AG04449 (cell line): ENCODE measurements at regions of chr3 and their contacts with region 1.

Region 1: GRCh38 chr3:42539869-42540714 is 37.6 kb downstream of the VIPR1 start:
- DNase-seq: no peak
- H3K4me3 ChIP-seq: no peak overlapping the region
- CTCF ChIP-seq: peak; percentile 66

Region 2: GRCh38 chr3:42247576-42248027 is 292.5 kb before region 1 on chr3:
- CTCF ChIA-PET with region 1: interaction called, 107 read pairs
- POLR2A ChIA-PET with region 1: no interaction called
- DNase-seq: no peak
- H3K4me3 ChIP-seq: no peak overlapping the region
- CTCF ChIP-seq: peak; percentile 66

Region 3: DNA sequence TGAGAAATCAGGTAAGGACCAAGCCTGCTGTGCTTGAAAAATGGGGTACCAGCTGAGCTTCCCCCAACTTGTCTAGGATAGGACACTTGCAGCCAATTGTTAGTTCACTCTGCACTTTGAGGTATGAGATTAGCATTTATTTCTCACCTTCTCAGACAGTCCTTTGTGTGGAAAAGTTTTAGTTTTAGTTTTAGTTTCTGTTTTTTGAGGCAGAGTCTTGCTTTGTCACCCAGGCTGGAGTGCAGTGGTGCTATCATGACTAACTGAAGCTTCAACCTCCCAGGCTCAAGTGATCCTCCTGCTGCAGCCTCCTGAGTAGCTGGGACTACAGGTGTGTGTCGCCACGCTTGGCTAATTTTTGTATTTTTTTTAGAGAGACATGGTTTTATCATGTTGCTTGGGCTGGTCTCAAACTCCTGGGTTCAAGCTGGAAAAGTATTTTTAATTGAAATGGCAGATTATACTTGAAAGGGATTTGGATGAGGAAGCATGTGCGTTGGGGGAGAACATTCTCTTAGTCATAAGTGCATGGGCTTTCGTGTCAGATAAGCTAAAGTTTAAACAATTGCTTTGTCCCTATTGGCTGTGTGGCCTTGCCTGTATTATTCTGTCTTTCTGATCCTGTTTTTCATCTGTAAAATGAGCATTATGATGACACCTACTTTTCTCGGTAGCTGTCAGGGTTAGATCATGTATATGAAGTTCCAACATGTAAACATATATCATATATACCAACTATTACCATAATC is 249.0 kb before region 1 on chr3:
- CTCF ChIA-PET with region 1: no interaction called
- POLR2A ChIA-PET with region 1: no interaction called
- DNase-seq: no peak
- H3K4me3 ChIP-seq: no peak overlapping the region
- CTCF ChIP-seq: no peak

Region 4: DNA sequence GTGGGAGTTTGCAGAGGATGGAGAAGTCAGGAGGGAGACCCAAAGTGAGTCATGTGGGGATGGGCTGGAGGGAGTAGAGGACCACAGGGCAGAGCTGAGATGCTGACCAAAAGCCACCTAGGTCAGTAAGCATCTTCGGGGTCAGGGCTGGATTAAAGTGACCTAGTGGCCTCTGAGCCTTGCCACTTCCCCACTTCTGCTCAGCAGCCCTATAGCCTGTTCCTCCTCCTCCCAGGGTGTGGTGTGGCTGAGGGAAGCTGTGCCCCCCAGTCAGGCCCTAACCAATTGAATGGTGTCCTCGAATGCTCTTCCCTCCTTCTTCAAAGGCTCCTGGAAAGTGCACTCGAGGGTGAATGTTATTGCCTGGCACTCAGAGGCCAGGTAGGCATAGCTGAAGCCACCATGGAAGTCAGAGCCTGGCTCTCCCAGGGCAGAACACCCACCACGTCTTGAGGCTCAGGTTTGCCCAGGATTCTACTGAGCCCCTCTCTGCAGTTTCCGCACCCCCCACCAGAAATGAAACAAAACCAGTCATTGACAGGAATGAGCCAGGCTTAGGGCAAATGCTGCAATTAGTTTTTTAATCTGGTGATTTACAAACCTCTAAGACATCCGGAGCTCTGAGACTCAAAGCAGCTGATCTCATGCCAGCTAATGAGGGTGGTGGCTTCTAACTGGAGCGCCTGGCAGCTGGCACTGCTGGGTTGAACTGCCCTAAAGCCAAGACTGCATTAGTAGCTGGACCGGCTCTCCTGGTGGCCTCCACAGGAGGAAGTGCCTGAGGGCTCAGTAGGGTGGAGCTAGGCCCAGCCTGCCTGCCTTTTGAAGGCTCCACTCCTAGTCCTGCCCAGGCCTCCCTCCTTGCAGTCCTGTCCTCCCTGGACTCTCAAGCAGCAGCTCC is 63.6 kb before region 1 on chr3:
- CTCF ChIA-PET with region 1: no interaction called
- POLR2A ChIA-PET with region 1: no interaction called
- DNase-seq: no peak
- H3K4me3 ChIP-seq: no peak overlapping the region
- CTCF ChIP-seq: no peak

Region 5: GRCh38 chr3:42552830-42553229 is 12.7 kb after region 1 on chr3:
- CTCF ChIA-PET with region 1: interaction called, 85 read pairs
- POLR2A ChIA-PET with region 1: no interaction called
- DNase-seq: no peak
- H3K4me3 ChIP-seq: no peak overlapping the region
- CTCF ChIP-seq: no peak